ENCODE measurements at regions of chr14 and their contacts with region 1.

Region 1: DNA sequence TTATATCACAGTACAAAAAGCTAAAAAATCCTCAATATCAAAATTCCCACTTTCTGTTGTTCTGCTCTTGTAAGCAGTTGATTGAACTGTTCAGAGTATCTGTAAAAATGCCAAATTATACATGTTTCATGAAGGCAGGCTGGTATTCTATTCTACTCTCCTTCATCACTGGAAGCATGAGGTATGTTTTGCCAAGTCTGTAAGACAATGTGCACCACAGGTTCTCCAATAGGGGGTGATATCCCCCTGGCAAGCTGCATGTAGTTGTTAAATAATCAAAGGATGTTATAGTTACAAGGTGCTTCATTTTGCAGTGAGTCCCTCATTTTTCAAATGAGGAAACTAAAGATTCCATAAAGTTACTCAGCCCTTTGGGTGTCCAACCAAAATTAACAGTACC is 15.1 kb upstream of the NEK9 start:
- DNase-seq: peak; percentile 51
- H3K4me3 Mint-ChIP-seq: no peak overlapping the region
- H3K27ac Mint-ChIP-seq: no peak overlapping the region
- H3K4me1 Mint-ChIP-seq: peaks cover 62% of the 10 kb centered on the region
- H3K27me3 Mint-ChIP-seq: no peaks in the 10 kb centered on the region

Region 2: GRCh38 chr14:75126679-75127473 is 15.1 kb before region 1 on chr14 and contains the start of gene NEK9:
- CTCF ChIA-PET with region 1: interaction called, 5 read pairs
- intact Hi-C with region 1: loop called (anchors 2 kb)
- DNase-seq: peak; percentile 92
- H3K4me3 Mint-ChIP-seq: peak within 1 kb of the TSS; percentile 96
- H3K27ac Mint-ChIP-seq: peak within 1 kb of the TSS; percentile 97
- H3K4me1 Mint-ChIP-seq: peaks cover 40% of the 10 kb centered on the region
- H3K27me3 Mint-ChIP-seq: no peaks in the 10 kb centered on the region
- total RNA-seq, gene NEK9: 53.5 to 55.6 TPM

Region 3: DNA sequence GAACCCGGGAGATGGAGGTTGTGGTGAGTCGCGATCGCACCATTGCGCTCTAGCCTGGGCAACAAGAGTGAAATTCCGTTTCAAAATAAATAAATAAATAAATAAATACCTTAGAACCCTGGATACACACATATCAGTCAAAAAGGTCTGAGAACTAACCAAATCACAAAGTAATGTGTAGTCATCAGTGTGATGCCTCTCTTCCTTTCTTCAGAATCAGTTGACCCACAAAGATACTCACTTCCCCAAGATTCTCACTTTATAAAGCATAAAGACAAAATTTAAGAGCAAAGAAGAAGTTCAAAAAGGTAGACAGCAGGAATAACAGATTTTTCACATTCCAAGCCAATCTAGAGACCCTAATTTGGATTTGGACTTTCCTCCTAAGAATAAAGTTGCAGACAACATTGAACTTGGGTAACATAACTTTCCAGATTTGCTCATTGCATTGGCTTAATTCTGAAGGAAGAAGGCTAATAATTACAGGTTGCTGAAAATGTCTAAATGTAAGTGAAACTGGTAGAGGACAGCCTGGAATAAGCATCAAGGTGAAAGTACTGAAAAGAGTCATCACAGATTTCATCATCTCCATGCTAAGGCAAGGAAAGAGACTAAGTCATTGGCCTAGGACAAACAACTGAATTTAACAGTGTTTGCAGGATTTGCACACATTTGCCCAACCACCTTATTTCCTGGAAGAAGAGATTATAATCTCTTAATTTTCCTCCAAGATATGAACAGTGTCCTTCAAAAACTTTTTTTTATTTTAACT is 17.1 kb after region 1 on chr14:
- CTCF ChIA-PET with region 1: interaction called, 4 read pairs
- intact Hi-C with region 1: loop called (anchors 2 kb)
- DNase-seq: no peak
- H3K4me3 Mint-ChIP-seq: no peak overlapping the region
- H3K27ac Mint-ChIP-seq: peak overlapping the region; percentile 66
- H3K4me1 Mint-ChIP-seq: peaks cover 64% of the 10 kb centered on the region
- H3K27me3 Mint-ChIP-seq: no peaks in the 10 kb centered on the region